MCF 10A (cell line): ENCODE measurements at regions of chr6 and their contacts with region 1.

Region 1: GRCh38 chr6:134464690-134465411 is 146.9 kb upstream of the SGK1 start:
- DNase-seq: peak; percentile 76
- H3K4me3 Mint-ChIP-seq: no peak overlapping the region
- H3K27ac Mint-ChIP-seq: peak overlapping the region; percentile 55
- H3K4me1 Mint-ChIP-seq: peaks cover 36% of the 10 kb centered on the region
- H3K27me3 Mint-ChIP-seq: no peaks in the 10 kb centered on the region
- CTCF ChIP-seq: no peak

Region 2: DNA sequence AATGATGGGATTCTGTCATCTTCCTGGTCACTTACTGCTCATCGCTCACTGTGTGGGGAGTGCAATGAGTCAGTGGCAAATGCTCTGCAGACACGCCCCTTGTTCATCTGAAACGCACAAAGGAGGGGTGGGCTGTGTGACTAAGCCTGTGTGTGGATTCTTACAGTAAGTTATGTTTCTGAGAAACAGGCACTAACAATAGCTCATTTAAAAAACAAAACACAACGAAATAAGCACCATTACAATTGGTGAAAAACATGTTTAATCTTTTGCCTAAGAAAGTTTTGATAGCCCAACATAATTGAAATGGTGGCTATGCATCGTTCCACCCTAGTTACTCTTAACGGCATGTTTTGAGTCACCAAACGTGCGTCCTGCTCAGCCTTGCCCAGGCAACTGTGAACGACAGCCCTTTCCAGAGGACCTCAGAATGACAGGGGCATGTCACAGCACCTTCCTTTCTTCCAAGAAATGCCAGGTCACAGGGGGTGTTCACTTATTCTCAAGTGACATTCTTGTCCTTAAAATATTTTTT is 28.5 kb before region 1 on chr6:
- CTCF ChIA-PET with region 1: interaction called, 13 read pairs
- POLR2A ChIA-PET with region 1: interaction called, 44 read pairs
- intact Hi-C with region 1: no loop called
- DNase-seq: peak; percentile 94
- H3K4me3 Mint-ChIP-seq: peak overlapping the region; percentile 43
- H3K27ac Mint-ChIP-seq: peak overlapping the region; percentile 88
- H3K4me1 Mint-ChIP-seq: peaks cover 24% of the 10 kb centered on the region
- H3K27me3 Mint-ChIP-seq: no peaks in the 10 kb centered on the region
- CTCF ChIP-seq: no peak

Region 3: DNA sequence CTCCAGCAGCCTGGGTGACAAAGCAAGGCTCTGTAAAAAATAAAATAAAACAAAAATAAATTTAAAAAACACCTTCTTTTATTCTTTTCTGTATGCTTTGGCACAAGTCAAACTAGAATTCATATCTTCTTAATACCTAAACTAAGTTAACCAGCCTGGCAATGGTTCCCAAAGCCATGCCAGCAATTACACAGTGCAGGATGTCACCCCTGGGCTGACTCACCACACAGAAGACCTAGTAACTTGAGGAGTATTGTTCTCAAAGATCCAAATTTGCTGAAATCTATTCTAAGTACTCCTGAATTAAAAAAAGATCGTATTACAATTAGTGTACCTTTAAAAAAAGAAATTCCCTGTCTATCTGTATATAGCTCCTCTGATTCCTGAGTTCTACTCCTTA is 15.7 kb after region 1 on chr6:
- CTCF ChIA-PET with region 1: no interaction called
- POLR2A ChIA-PET with region 1: interaction called, 34 read pairs
- intact Hi-C with region 1: no loop called
- DNase-seq: peak; percentile 67
- H3K4me3 Mint-ChIP-seq: no peak overlapping the region
- H3K27ac Mint-ChIP-seq: no peak overlapping the region
- H3K4me1 Mint-ChIP-seq: peaks cover 16% of the 10 kb centered on the region
- H3K27me3 Mint-ChIP-seq: no peaks in the 10 kb centered on the region
- CTCF ChIP-seq: no peak

Region 4: GRCh38 chr6:134502614-134503549 is 38.0 kb after region 1 on chr6:
- CTCF ChIA-PET with region 1: interaction called, 7 read pairs
- POLR2A ChIA-PET with region 1: interaction called, 17 read pairs
- intact Hi-C with region 1: no loop called
- DNase-seq: peak; percentile 35
- H3K4me3 Mint-ChIP-seq: peak overlapping the region; percentile 8
- H3K27ac Mint-ChIP-seq: peak overlapping the region; percentile 67
- H3K4me1 Mint-ChIP-seq: peaks cover 15% of the 10 kb centered on the region
- H3K27me3 Mint-ChIP-seq: no peaks in the 10 kb centered on the region
- CTCF ChIP-seq: no peak